ENCODE measurements at regions of chr5 and their contacts with region 1.

Region 1: DNA sequence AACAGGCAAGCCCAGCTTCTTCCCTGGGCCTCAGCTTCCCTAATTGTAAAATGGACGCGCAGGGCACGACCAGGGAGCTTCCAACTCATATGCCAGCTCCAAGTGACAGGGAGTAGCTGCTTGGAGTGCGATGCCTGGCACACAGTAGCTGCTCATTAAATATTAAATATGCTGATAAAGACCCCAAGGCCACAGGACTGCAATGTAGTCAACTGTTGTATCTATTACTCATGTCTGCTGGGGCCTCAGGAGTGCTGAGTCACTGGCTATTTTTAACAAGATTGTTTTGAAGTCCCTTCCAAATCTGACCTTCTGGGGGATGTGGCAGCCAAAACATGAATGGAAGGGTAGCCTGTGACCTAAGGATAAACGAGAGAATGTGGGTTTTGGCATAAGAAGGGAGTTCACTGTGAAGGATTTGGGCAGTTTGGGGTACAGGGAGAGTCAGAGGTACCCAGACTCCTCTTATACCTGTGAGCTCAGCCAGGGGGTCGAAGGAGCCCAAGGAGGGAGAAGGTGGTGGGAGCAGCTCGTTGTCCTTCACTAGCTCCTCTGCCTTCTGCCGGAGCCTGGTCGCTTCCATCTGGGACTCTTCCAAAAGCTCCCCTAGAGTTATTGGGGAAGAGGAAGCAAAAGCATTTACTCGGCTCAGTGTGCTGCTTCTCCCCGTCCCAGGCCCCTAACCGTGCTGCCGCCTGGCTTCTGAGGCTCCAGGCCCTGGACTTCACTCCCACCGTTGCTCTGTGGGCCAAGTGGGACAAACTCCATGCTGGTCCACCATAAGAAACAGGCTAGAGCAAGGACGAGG is 17.5 kb downstream of the TNIP1 start:
- DNase-seq: no peak
- ATAC-seq: no peak
- H3K4me3 Mint-ChIP-seq: peak overlapping the region; percentile 53
- H3K27ac Mint-ChIP-seq: peak overlapping the region; percentile 89
- H3K4me1 Mint-ChIP-seq: peaks cover 99% of the 10 kb centered on the region
- H3K27me3 Mint-ChIP-seq: no peaks in the 10 kb centered on the region
- CTCF ChIP-seq: no peak

Region 2: GRCh38 chr5:150758531-150759333 is 304.6 kb before region 1 on chr5 and contains the start of gene DCTN4:
- CTCF ChIA-PET with region 1: no interaction called
- POLR2A ChIA-PET with region 1: no interaction called
- intact Hi-C with region 1: loop called (anchors 1 kb)
- DNase-seq: peak; percentile 87
- ATAC-seq: peak; percentile 93
- H3K4me3 Mint-ChIP-seq: no peak within 1 kb of the TSS
- H3K27ac Mint-ChIP-seq: no peak within 1 kb of the TSS
- H3K4me1 Mint-ChIP-seq: peaks cover 17% of the 10 kb centered on the region
- H3K27me3 Mint-ChIP-seq: peaks cover 9% of the 10 kb centered on the region
- CTCF ChIP-seq: no peak
- total RNA-seq, gene DCTN4: 49.0 and 49.8 TPM in 2 replicates

Region 3: DNA sequence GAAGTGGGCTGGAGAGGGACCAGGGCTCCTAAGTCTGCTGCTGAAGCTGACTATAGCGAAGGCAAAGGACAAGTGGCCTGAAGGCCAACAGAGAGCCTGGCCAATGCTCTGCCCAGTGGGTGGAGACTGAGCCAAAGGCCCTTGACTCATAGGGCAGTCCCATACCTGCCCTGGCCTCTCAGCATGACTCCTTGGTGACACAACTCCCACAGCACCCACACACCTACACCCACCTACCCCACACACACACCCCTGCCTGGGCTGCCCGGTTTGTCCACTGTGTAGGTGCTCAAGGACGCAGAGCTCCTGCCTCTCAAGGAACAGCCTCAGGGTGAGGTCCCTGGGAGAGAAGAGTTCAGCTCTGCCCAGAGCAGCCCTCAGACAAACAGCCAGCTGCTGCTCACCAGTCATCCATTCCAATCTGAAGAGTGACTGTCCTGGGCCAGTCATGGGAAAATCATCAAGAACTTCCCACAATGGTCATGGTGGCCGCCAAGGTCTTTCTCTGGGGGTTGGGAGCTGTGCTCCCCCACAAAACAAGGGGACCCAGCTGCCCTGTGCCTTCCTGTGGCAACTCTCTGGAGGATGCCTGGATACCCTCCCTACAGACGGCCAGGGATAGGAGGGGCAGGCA is 12.5 kb after region 1 on chr5:
- CTCF ChIA-PET with region 1: interaction called, 5 read pairs
- POLR2A ChIA-PET with region 1: interaction called, 242 read pairs
- intact Hi-C with region 1: loop called (anchors 1 kb)
- DNase-seq: no peak
- ATAC-seq: no peak
- H3K4me3 Mint-ChIP-seq: peak overlapping the region; percentile 93
- H3K27ac Mint-ChIP-seq: peak overlapping the region; percentile 94
- H3K4me1 Mint-ChIP-seq: peaks cover 96% of the 10 kb centered on the region
- H3K27me3 Mint-ChIP-seq: no peaks in the 10 kb centered on the region
- CTCF ChIP-seq: no peak

Region 4: DNA sequence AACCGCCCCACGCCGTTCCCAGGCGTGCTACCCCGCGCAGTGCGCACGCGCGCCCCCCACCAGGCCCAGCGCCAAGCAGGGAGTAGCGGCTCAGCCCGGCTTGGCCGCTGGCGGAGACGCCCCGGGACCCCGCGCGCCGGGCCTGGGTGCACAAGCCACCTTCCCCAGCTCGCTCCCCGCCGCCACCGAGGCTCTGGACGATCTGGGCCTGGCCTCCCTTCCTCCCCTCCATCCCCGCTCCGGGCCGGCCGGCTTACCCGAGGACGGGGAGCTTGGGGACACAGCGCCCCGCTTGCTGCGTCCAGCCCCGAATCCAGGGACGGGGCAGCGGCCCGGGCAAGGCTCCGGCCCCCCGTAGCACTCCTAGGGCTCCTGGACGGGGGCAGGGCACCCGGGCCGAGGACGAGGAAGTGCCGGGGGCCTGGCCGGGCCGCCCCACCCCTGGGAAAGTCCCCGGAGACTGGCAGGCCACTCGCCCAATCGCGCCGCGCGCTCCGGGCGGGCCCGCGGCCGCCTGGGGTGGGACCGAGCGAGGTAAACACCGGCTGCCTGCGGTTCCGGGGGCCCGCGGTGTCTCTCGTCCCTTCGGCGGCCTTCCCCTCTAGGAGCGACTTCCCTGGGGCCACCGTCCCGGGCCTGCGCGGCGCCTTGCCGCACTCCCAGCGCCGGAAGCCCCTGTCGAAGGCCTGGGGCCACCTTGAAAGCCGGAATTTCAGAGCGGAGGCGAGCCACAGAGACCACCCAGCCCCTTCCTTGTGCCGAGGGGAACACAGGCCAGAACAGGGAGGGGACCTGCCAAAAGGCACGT is 17.5 kb after region 1 on chr5 and contains the start of gene TNIP1:
- CTCF ChIA-PET with region 1: interaction called, 5 read pairs
- POLR2A ChIA-PET with region 1: interaction called, 242 read pairs
- intact Hi-C with region 1: loop called (anchors 1 kb)
- DNase-seq: peak; percentile 99
- ATAC-seq: peak; percentile 81
- H3K4me3 Mint-ChIP-seq: peak within 1 kb of the TSS; percentile 93
- H3K27ac Mint-ChIP-seq: peak within 1 kb of the TSS; percentile 94
- H3K4me1 Mint-ChIP-seq: peaks cover 88% of the 10 kb centered on the region
- H3K27me3 Mint-ChIP-seq: no peaks in the 10 kb centered on the region
- CTCF ChIP-seq: no peak
- total RNA-seq, gene TNIP1: 506 and 512 TPM in 2 replicates

Region 5: DNA sequence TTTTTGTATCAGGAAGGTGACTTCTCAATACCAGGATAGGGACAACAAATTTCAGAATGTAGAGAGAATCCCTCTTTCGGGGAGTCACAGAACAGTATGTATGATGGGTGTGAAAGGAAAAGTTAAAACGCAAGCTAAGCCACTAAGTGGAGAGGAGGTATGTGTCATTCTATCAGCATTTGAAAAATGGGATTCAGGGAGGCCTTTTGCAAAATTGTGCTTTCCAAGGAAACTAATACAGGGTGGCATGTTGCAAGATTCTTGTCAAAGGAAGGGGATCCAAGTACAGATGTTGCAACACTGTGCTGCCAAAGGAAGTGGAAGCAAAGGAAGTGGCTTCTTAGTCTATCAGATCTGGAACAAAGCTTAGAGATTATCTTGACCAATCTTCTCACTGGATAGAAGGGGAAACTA is 30.1 kb after region 1 on chr5:
- CTCF ChIA-PET with region 1: interaction called, 4 read pairs
- POLR2A ChIA-PET with region 1: interaction called, 38 read pairs
- intact Hi-C with region 1: loop called (anchors 1 kb)
- DNase-seq: no peak
- ATAC-seq: no peak
- H3K4me3 Mint-ChIP-seq: peak overlapping the region; percentile 81
- H3K27ac Mint-ChIP-seq: peak overlapping the region; percentile 94
- H3K4me1 Mint-ChIP-seq: peaks cover 74% of the 10 kb centered on the region
- H3K27me3 Mint-ChIP-seq: no peaks in the 10 kb centered on the region
- CTCF ChIP-seq: no peak

Region 6: DNA sequence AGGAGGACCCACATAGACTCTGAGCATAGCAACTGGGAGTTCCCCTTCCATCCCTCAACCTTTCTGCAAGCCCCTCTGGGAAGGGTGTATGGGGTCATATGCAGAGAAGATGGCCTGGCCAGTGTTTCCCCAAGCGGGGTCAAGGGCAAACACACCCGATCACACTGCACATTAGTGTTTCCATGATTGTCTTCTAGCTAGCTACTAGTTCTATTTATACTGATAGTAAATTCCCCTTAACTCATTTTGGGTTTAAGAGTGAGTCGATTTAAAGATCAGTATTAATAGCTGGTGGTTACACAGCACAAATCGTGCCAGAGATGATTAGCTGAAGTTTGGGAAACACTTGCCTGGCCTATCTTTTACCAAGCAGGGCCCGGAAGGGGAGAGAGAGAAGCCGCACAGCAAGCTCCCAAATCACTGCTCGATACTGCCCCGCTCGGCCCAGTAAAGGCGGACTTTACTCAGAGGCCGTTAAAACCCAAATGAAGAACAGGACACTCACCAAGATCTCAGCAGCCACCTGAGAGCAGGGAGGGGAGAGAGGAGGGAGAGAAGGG is 46.9 kb after region 1 on chr5:
- CTCF ChIA-PET with region 1: interaction called, 625 read pairs
- POLR2A ChIA-PET with region 1: interaction called, 9 read pairs
- intact Hi-C with region 1: loop called (anchors 1 kb)
- DNase-seq: no peak
- ATAC-seq: no peak
- H3K4me3 Mint-ChIP-seq: peak overlapping the region; percentile 6
- H3K27ac Mint-ChIP-seq: peak overlapping the region; percentile 20
- H3K4me1 Mint-ChIP-seq: peaks cover 33% of the 10 kb centered on the region
- H3K27me3 Mint-ChIP-seq: no peaks in the 10 kb centered on the region
- CTCF ChIP-seq: no peak

Measured in activated B cell treated with CpG ODN at 0.5 μM for 24 hours (primary cell).